Mammary epithelial cell (primary cell): ENCODE measurements at regions of chr1 and their contacts with region 1.

Region 1: DNA sequence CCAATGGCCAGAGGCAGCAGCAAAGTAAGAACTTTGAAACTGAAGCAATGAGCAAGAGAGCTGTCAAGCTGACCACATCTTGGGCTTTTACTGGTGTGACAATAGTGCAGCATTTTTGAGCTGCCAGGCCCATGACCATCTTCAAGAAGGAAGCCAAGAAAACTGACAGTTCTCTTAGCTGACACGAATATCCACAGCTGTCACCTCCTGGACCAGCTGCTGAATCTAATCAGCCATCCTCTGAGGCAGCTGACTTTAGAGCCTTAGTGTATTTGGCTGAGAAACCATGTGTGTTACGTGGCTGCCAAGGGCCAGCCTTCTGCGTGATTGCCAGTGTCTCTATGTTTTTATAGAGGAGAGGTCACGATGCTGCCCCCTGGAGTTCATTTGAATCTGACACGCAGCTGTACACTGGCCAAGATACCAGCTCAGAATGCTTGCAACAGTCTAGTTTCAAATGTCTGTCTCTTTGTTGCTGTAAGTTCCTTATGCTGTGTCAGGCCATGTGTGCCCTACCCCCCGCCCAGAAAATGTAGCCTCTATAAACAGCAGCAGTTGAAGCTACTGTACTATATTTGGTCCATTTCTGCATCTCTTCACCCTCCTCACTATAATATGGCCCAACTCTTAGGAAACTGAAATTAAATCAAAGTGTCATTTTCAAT is 39.7 kb downstream of the PALMD start:
- DNase-seq: peak; percentile 73
- H3K4me3 ChIP-seq: no peak overlapping the region
- H3K27ac ChIP-seq: no peak overlapping the region
- H3K4me1 ChIP-seq: peaks cover 6% of the 10 kb centered on the region
- H3K27me3 ChIP-seq: no peaks in the 10 kb centered on the region
- CTCF ChIP-seq: peak; percentile 66

Region 2: GRCh38 chr1:99180343-99180808 is 505.3 kb before region 1 on chr1:
- CTCF ChIA-PET with region 1: no interaction called
- dilution Hi-C with region 1: no loop called
- in situ Hi-C with region 1: no loop called
- intact Hi-C with region 1: loop called (anchors 5 kb)
- DNase-seq: peak; percentile 62
- H3K4me3 ChIP-seq: no peak overlapping the region
- H3K27ac ChIP-seq: no peak overlapping the region
- H3K4me1 ChIP-seq: no peaks in the 10 kb centered on the region
- H3K27me3 ChIP-seq: no peaks in the 10 kb centered on the region
- CTCF ChIP-seq: peak; percentile 73 to 89

Region 3: DNA sequence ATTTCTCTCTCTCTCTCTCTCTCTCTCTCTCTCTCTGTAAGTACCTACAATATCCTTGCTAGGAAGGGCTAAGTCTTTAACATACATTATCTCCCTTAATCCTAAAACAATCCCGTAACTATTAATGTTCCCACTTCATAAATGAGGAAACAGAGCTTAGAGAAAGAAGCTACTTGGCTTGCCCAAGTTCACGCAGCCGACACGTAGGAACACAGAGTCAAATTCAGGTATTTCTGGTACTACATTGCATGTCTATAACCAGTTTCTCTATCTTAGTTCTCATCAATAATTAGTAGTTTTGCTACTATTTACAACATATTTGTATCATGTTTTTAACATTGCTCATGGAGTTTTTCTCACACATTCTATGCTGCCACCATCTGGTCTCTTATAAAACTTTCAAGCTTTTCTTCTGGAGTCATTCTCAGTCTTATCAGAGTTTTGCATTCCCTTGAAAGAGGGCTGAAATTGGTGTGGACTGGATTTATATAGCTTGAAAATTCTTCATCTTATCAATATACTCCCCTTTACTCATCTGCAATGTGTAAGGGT is 158.6 kb before region 1 on chr1:
- CTCF ChIA-PET with region 1: no interaction called
- dilution Hi-C with region 1: no loop called
- in situ Hi-C with region 1: no loop called
- intact Hi-C with region 1: loop called (anchors 5 kb)
- DNase-seq: no peak
- H3K4me3 ChIP-seq: no peak overlapping the region
- H3K27ac ChIP-seq: no peak overlapping the region
- H3K4me1 ChIP-seq: no peaks in the 10 kb centered on the region
- H3K27me3 ChIP-seq: no peaks in the 10 kb centered on the region
- CTCF ChIP-seq: peak; percentile 27 to 50

Region 4: DNA sequence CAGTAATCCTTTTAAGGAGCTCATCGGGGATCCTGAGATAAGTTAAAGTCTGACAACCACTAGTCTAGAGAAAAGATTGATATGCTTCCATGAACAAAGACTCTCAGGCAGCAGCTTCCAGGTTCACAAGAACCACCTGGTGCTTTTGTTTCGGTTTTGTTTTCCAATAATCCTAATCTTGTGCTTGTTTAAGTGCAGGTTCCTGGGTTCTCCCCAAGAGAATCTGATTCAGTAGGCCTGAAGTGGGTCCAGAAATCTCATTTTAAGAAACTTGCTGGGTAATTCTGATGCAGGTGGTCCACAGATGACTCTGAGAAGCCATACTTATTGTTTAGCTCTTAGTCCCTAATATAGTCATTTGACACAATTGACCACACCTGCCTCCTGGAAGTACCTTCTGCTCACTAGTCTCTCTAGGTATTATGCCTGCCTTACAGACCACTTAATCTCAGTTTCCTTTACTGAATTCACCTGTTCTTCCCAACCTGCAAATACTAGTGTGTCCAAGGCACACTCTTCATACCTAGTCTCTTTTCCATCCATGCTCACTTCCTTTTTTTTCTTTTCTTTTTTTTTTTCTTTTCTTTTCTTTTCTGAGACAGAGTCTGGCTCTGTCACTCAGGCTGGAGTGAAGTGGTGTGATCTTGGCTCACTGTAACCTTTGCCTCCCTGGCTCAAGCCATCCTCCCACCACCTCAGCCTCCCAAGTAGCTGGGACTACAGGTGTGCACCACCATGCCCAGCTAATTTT is 101.3 kb after region 1 on chr1:
- CTCF ChIA-PET with region 1: no interaction called
- dilution Hi-C with region 1: no loop called
- in situ Hi-C with region 1: no loop called
- intact Hi-C with region 1: no loop called
- DNase-seq: no peak
- H3K4me3 ChIP-seq: no peak overlapping the region
- H3K27ac ChIP-seq: no peak overlapping the region
- H3K4me1 ChIP-seq: no peaks in the 10 kb centered on the region
- H3K27me3 ChIP-seq: peaks cover 2% of the 10 kb centered on the region
- CTCF ChIP-seq: no peak

Region 5: GRCh38 chr1:99886841-99887240 is 201.2 kb after region 1 on chr1:
- CTCF ChIA-PET with region 1: no interaction called
- dilution Hi-C with region 1: no loop called
- in situ Hi-C with region 1: no loop called
- intact Hi-C with region 1: no loop called
- DNase-seq: peak; percentile 33
- H3K4me3 ChIP-seq: no peak overlapping the region
- H3K27ac ChIP-seq: no peak overlapping the region
- H3K4me1 ChIP-seq: no peaks in the 10 kb centered on the region
- H3K27me3 ChIP-seq: no peaks in the 10 kb centered on the region
- CTCF ChIP-seq: no peak